GM12878 (cell line): ENCODE measurements at regions of chr4 and their contacts with region 1.

Region 1: GRCh38 chr4:146273204-146273901 is 59.0 kb downstream of the REELD1 start:
- DNase-seq: peak; percentile 94
- ATAC-seq: peak; percentile 78
- H3K4me3 ChIP-seq: peak overlapping the region; percentile 6; the same call in 1 of the 2 replicates
- H3K27ac ChIP-seq: peak overlapping the region; percentile 81
- H3K4me1 ChIP-seq: peaks cover 66% of the 10 kb centered on the region
- H3K27me3 ChIP-seq: no peaks in the 10 kb centered on the region
- CTCF ChIP-seq: no peak
- EP300 ChIP-seq: peak; percentile 76 to 79; a peak in 2 of 4 replicates
- POLR2A ChIP-seq: peak; percentile 48; the same call in 1 of the 2 replicates
- RAD21 ChIP-seq: peak; percentile 5; the same call in 1 of the 2 replicates

Region 2: GRCh38 chr4:145808021-145808650 is 465.2 kb before region 1 on chr4:
- CTCF ChIA-PET with region 1: no interaction called
- POLR2A ChIA-PET with region 1: no interaction called
- RAD21 ChIA-PET with region 1: interaction called, 7 read pairs
- SMC1A ChIA-PET with region 1: interaction called, 3 read pairs
- in situ Hi-C with region 1: no loop called
- intact Hi-C with region 1: loop called (anchors 5 kb)
- DNase-seq: peak; percentile 86
- ATAC-seq: peak; percentile 87
- H3K4me3 ChIP-seq: peak overlapping the region; percentile 18; the same call in 1 of the 2 replicates
- H3K27ac ChIP-seq: peak overlapping the region; percentile 90
- H3K4me1 ChIP-seq: peaks cover 36% of the 10 kb centered on the region
- H3K27me3 ChIP-seq: no peaks in the 10 kb centered on the region
- CTCF ChIP-seq: no peak
- EP300 ChIP-seq: peak; percentile 87 to 91
- POLR2A ChIP-seq: no peak
- RAD21 ChIP-seq: peak; percentile 34; the same call in 1 of the 2 replicates

Region 3: DNA sequence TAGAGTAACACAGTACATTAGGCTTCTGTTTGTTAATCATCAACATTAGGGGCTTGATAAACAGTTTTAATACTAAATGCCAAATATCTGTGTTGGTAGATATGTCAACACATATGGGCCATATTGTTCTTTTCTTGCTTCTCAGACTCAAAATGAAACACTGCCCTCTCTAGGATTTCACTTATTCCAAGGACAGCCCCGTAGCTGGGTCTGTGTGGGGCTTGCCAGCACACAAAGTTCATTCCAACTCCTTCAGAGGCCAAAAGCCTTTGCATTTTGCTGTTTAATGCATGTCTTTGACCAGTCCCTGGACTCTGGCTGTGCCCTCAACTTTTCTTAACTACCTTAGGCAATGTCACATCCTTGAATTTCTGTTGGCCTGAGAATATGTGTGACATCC is 232.7 kb before region 1 on chr4:
- CTCF ChIA-PET with region 1: no interaction called
- POLR2A ChIA-PET with region 1: no interaction called
- RAD21 ChIA-PET with region 1: no interaction called
- SMC1A ChIA-PET with region 1: no interaction called
- in situ Hi-C with region 1: no loop called
- intact Hi-C with region 1: loop called (anchors 5 kb)
- DNase-seq: no peak
- ATAC-seq: peak; percentile 36
- H3K4me3 ChIP-seq: no peak overlapping the region
- H3K27ac ChIP-seq: no peak overlapping the region
- H3K4me1 ChIP-seq: peaks cover 10% of the 10 kb centered on the region
- H3K27me3 ChIP-seq: no peaks in the 10 kb centered on the region
- CTCF ChIP-seq: no peak; a peak in 1 of 6 replicates
- EP300 ChIP-seq: no peak
- POLR2A ChIP-seq: no peak
- RAD21 ChIP-seq: no peak

Region 4: GRCh38 chr4:146252969-146253611 is 20.3 kb before region 1 on chr4:
- CTCF ChIA-PET with region 1: interaction called, 5 read pairs
- POLR2A ChIA-PET with region 1: no interaction called
- RAD21 ChIA-PET with region 1: interaction called, 11 read pairs
- SMC1A ChIA-PET with region 1: interaction called, 28 read pairs
- in situ Hi-C with region 1: no loop called
- intact Hi-C with region 1: no loop called
- DNase-seq: no peak
- ATAC-seq: no peak
- H3K4me3 ChIP-seq: no peak overlapping the region
- H3K27ac ChIP-seq: no peak overlapping the region
- H3K4me1 ChIP-seq: no peaks in the 10 kb centered on the region
- H3K27me3 ChIP-seq: no peaks in the 10 kb centered on the region
- CTCF ChIP-seq: no peak
- EP300 ChIP-seq: no peak
- POLR2A ChIP-seq: no peak
- RAD21 ChIP-seq: no peak

Region 5: DNA sequence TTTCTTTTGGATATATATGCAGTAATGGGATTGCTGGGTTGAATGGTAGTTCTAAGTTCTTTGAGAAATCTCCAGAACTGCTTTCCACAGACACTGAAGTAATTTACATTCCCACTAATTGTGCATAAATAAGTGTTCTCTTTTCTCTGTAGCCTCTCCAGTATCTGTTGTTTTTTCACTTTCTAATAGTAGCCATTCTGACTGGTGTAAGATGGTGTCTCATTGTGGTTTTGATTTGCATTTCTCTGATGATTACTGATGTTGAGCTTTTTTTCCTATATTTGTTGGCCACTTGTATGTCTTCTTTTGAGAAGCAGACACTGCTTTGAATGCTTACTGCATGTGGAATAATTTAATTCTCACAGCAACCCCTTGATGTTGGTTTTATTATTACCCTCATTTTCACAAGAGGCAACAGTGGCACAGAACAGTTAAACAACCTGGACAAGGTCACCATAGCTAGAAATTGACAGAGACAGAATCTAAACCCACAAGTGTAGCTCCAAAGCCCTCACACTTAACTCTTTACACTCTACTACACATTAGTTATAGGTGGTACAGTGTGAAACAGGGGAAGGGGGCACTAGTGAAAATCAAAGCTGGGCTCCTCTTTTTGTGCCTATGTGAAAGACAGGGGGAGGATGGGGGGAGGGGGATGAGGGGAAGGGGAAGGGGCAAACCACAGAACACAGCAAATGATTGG is 37.1 kb after region 1 on chr4:
- CTCF ChIA-PET with region 1: interaction called, 7 read pairs
- POLR2A ChIA-PET with region 1: interaction called, 3 read pairs
- RAD21 ChIA-PET with region 1: interaction called, 37 read pairs
- SMC1A ChIA-PET with region 1: interaction called, 18 read pairs
- in situ Hi-C with region 1: no loop called
- intact Hi-C with region 1: no loop called
- DNase-seq: peak; percentile 35
- ATAC-seq: peak; percentile 91
- H3K4me3 ChIP-seq: no peak overlapping the region
- H3K27ac ChIP-seq: peak overlapping the region; percentile 55; the same call in 1 of the 2 replicates
- H3K4me1 ChIP-seq: peaks cover 18% of the 10 kb centered on the region
- H3K27me3 ChIP-seq: no peaks in the 10 kb centered on the region
- CTCF ChIP-seq: no peak
- EP300 ChIP-seq: 0 out of 4 replicates have a peak, but pooled peaks of 1 of the 2 experiments have one; percentile 15
- POLR2A ChIP-seq: no peak
- RAD21 ChIP-seq: no peak

Region 6: DNA sequence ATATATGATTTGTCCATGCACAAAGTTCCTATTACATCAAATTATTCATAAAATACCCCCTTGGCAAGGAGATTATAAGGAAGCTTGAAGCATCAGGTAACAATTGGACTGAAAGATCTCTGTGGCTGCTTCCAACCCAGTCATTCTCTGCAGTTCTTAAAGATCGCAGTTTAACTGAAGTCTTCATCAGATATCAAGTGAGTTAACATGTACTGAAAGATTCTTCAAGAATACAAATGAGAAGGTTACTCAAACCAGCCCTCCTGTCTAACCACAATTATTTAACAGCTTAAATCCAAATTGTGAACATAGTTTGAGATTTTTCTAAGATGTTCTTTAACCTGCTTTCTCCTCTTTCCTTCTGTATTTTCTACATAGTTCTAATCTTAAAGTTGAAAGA is 192.3 kb after region 1 on chr4:
- CTCF ChIA-PET with region 1: no interaction called
- POLR2A ChIA-PET with region 1: no interaction called
- RAD21 ChIA-PET with region 1: no interaction called
- SMC1A ChIA-PET with region 1: no interaction called
- in situ Hi-C with region 1: no loop called
- intact Hi-C with region 1: no loop called
- DNase-seq: no peak
- ATAC-seq: peak; percentile 68
- H3K4me3 ChIP-seq: no peak overlapping the region
- H3K27ac ChIP-seq: no peak overlapping the region
- H3K4me1 ChIP-seq: no peaks in the 10 kb centered on the region
- H3K27me3 ChIP-seq: no peaks in the 10 kb centered on the region
- CTCF ChIP-seq: no peak
- EP300 ChIP-seq: no peak
- POLR2A ChIP-seq: no peak
- RAD21 ChIP-seq: no peak